Right cardiac atrium (tissue), 5 donors: ENCODE measurements at regions of chr19 and their contacts with region 1.

Region 1: DNA sequence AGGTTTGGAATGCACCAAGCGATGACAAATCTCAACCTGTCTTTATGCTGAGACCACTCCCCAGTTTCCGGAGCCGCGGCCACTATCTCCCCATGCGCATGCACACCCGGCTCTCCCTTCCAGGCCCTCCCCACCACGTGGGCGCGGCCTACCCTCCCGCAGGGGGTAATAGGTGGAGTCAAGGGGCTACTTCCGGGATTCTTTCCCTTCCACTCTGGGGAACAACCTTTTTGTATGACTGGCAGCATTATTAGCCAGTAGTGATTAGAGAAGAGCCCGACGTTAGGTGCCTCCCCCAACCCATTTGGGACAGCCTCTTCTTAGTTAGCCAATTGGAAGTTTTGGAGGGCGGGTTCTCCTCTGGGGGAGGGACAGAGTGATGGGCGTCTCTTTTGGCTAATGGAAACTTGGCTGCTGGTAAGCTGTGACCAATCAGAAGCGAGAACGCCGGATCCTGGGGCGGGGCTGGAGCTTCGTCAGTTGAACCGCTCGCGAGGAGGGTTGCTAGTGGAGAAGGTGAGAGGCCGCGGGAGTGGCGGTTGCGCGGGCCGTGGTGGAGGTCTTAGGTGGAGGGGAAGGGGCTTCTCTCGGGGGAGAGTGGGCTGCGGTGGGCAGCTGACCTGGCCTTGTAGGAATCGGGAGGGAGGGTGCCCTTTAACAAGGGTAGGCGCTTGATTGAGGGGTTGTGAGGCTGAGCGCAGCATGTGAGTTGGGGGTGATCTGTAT is at the start of gene CCDC61:
- DNase-seq: peak; percentile 93 to 96 (median 96)
- ATAC-seq: peak; percentile 99
- H3K4me3 ChIP-seq: peak within 1 kb of the TSS; percentile 78
- H3K27ac ChIP-seq: peak within 1 kb of the TSS; percentile 69
- H3K4me1 ChIP-seq: no peaks in the 10 kb centered on the region
- H3K27me3 ChIP-seq: no peaks in the 10 kb centered on the region
- total RNA-seq, gene CCDC61: 7.1 to 12.7 (median 9.6) TPM

Region 2: DNA sequence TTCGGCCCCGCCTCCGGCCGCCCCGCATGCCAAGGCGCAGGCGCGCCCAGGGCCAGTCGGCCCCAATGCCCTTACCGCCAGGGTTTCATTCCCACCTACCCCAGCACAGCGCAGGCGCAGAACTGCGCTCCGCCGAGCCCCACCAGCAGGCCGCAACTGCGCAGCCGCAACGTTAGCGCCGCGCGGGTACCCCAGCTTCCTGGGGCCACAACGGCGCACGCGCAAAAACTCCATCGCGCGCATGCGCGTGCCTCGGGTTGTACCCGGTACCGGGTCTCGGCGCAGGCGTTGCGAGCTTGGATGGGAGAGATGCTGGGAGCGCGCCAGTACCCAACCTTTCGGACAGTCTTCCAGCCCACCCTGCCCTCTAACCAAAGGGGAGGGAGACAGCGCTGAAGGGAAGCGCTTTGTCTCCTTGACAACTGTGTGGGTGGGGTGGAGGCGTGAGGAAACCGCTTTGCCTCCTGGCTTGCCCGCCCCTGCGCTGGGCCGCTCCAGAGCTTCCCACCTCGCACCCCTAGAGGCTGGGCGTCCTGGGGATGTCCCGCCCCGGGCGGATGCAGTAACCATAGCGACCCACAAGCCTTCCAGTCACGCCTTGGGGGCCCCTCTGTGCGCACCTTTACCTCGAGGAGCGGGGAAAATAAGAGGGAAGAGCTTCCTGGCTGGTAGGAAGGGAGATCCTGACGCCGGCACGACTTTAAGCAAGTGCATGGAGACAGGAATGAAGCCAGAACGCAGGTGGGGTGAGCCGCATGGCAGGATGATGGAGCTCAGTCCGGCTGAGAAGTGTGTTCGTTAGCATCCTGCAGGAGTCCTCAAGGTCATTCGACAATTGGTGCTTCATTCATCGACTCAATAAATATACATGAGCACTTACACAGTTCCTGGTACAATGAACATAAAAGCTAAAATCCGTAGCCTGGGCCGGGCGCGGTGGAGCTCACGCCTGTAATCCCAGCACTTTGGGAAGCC is 92.2 kb before region 1 on chr19:
- intact Hi-C with region 1: loop called in 1 of 4 experiments (anchors 10 kb)
- DNase-seq: peak; percentile 99 to 100 (median 99)
- ATAC-seq: peak; percentile 96 to 97
- H3K4me3 ChIP-seq: peak overlapping the region; percentile 91
- H3K27ac ChIP-seq: peak overlapping the region; percentile 48
- H3K4me1 ChIP-seq: peaks cover 4% of the 10 kb centered on the region
- H3K27me3 ChIP-seq: no peaks in the 10 kb centered on the region

Region 3: DNA sequence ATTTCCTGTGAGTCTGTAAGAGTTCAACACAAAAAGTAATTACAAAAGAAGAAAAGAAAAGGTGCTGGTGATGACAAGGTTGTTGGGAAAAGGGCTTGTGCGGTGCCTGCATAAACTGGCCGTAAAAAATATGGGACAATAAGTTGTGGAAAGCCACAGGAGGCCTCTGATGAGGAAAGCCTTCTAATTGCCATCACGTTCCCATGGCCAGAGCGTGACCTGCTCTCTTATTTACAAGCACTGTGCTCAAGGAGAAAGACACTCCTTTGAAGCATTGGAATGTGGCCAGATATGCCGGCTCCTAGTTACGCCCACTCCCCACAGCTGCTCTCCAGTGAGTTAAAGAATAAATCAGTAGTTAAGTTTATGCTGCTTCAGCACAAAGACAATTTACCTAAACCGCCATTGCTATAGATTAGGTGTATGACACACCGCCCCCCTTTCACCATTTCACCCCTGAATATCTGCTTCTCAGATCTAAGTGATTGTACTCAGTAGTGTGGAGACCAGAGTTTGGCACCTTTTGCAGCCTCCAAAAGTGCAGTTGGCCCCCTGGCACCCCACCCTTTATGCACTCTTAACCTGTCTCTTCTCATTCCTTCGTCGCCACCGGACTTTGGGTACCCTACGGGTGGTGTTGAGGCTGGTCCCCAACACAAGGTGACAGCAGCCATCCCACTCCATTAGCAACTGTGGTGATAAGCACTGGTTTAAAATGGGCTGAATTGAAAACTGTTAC is 35.8 kb after region 1 on chr19:
- intact Hi-C with region 1: no loop called
- DNase-seq: no peak
- ATAC-seq: no peak
- H3K4me3 ChIP-seq: no peak overlapping the region
- H3K27ac ChIP-seq: no peak overlapping the region
- H3K4me1 ChIP-seq: no peaks in the 10 kb centered on the region
- H3K27me3 ChIP-seq: no peaks in the 10 kb centered on the region

Region 4: DNA sequence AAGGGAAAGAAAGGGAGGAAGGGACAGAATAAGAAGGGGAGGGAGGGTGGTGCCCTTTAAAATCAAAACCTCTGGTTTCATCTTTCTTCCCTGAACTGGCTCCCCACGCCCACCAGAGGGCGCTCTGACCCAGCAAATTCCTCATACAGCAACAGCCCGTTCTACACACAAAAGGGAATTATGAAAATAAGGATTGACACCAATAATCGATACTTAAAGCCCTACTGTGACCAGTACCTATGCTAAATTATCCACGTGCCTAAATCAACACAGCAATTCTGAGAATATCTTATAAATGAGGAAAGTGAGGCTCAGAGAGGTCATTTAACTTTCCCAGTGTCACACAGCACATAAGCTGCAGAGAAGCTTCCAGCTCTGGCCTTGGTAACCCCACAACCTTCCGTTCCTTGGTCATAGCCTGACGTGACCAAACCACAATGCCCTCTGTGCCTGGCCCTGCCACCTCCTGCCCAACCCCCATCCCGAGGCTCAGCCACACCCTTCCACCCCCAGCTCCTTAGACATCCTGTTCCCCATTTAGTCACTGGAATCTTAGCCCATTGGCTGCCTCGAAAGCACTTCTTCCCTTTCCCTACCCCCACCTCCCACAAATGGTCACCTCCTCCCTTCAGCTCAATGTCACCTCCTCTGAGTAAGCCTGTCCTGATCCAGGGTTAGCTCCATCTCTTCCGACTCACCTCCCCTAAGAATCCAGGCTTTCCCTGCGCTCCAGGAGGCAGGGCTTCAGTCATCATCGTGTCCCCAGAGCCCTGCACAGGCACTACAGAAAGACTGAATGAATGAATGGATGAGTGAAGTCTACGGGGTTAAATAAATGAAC is 534.7 kb after region 1 on chr19:
- intact Hi-C with region 1: no loop called
- DNase-seq: peak; percentile 69 to 86 (median 85)
- ATAC-seq: peak; percentile 72 to 78
- H3K4me3 ChIP-seq: no peak overlapping the region
- H3K27ac ChIP-seq: no peak overlapping the region
- H3K4me1 ChIP-seq: no peaks in the 10 kb centered on the region
- H3K27me3 ChIP-seq: no peaks in the 10 kb centered on the region